K562 (cell line): ENCODE measurements at regions of chr6 and their contacts with region 1.

Region 1: DNA sequence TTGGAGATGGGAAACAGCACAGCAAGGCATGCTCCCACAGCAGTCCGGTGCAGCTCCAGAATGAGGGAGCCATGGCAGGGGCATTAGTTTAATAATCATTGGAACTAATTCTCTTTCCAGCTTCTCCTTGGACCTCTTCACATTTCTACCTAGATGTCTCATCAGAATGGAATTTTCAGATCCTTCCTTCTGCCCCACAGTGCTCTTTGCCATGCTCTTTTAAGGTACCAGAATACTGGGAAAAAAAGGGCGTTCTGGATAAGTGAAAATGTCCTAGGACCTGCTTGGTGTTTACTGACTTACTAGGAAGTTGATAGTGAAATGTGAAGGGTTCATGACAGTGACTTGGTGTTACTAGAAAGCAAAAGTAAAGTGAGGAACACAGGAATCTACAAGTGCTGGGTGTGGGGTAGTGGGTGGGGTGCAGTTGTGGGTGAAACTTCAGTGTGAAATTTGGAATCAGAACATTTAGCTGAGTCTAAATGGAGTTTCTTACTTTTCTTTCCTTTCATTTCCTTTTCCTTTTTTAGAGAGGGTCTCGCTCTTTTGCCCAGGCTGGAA is 207.1 kb downstream of the ARID1B start:
- DNase-seq: no peak
- ATAC-seq: no peak
- H3K4me3 ChIP-seq: no peak overlapping the region
- H3K27ac ChIP-seq: no peak overlapping the region
- H3K4me1 ChIP-seq: peaks cover 9 to 21% of the 10 kb centered on the region in 2 experiments
- H3K27me3 ChIP-seq: no peaks in the 10 kb centered on the region
- CTCF ChIP-seq: no peak
- EP300 ChIP-seq: no peak
- POLR2A ChIP-seq: no peak
- RAD21 ChIP-seq: no peak

Region 2: DNA sequence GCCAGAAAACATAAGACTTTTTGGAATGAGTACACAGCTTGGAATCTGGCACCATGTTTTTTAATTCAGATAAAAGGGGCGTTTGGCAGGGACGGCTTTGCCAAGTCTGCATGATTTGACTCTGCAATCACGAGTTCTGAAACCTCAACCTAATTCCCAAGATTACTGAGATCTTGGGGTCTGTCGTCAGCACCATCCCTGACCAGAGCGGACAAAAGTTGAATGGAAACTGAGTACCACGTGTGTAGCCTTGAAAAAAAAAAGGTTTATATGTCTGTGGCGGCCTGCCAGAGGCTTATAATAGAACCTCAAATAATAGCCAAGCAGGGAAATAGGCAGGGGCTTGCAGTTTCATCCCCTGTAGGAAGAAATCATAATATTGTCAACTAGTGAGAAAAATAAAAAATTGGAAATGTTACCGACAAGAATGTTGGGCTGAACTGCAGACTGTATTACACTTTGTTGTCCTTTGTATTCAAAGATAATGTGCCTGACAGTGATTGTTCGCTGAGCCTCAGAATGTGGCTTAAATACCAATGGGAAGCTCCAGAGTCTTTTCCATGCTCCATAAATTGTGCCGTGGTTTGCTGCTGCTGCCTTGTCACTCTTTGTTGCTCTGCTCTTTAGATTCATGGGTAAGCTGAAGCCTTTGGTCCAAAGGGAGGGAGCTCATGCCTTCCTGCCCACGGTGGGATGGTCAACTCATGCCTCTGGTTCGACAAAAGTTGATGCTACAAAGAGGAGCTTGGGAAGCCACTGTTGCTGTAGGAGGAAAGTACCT is 325.9 kb before region 1 on chr6:
- CTCF ChIA-PET with region 1: no interaction called
- POLR2A ChIA-PET with region 1: no interaction called
- in situ Hi-C with region 1: no loop called
- intact Hi-C with region 1: no loop called
- DNase-seq: no peak
- ATAC-seq: no peak
- H3K4me3 ChIP-seq: no peak overlapping the region
- H3K27ac ChIP-seq: no peak overlapping the region
- H3K4me1 ChIP-seq: no peaks in the 10 kb centered on the region; a peak in 2 of 5 replicates
- H3K27me3 ChIP-seq: peaks cover 9 to 24% of the 10 kb centered on the region in 2 experiments; a peak in 4 of 5 replicates
- CTCF ChIP-seq: no peak
- EP300 ChIP-seq: no peak
- POLR2A ChIP-seq: no peak
- RAD21 ChIP-seq: no peak

Region 3: DNA sequence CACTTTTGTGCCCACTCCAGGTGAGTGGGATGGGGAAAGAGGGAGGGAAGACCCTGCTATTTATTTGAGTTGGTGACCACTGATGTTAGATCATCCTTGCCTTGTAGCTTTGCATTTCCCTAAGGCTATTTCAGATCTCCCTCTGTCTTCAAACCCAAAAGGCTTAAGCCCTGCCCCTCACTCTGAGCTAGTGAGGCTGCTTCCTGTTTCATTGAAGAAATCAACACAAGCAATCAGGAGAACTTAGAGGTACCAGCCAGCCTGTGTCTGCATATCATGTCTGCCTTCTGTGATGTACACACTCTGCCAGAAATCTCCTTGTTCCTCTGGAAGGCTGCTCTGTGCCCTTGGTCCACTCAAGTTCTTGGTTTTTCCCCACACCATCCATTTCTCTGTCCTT is 71.8 kb before region 1 on chr6:
- CTCF ChIA-PET with region 1: no interaction called
- POLR2A ChIA-PET with region 1: no interaction called
- in situ Hi-C with region 1: no loop called
- intact Hi-C with region 1: no loop called
- DNase-seq: peak in 2 of 4 experiments; percentile 28 to 42
- ATAC-seq: peak; percentile 77
- H3K4me3 ChIP-seq: no peak overlapping the region
- H3K27ac ChIP-seq: no peak overlapping the region
- H3K4me1 ChIP-seq: peaks cover 5 to 21% of the 10 kb centered on the region in 2 experiments; a peak in 4 of 5 replicates
- H3K27me3 ChIP-seq: no peaks in the 10 kb centered on the region
- CTCF ChIP-seq: no peak
- EP300 ChIP-seq: no peak
- POLR2A ChIP-seq: no peak
- RAD21 ChIP-seq: no peak

Region 4: DNA sequence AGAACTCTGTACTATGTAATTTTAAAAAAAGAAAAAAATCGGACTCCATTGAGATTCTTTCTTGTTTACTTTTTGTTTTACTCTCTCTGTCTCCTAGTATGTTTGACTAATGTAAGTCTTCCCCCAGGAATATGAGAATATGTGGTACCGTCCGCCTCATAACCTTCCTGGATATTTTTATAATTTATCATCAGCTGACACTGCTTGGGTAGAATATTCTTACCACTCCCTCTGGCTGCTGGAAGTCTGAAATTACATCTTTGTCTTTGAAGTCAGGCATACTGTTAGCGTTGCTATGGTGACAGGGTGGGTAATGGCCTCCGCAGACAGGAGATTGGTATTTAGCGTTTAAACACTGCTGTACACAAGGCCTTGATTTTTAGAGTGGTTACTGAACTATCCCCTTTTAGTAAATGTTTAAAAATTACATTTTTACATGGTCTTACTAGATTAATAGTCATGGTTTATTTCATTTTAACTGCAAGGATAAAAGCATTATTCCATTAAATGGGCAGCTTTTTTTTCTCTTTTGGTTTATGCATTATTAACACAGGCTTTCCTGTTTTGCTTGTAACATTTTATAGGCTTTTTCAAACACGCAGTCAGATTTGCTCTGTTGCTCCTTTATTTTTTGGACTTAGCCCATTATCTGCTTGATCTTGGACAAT is 30.6 kb before region 1 on chr6:
- CTCF ChIA-PET with region 1: no interaction called
- POLR2A ChIA-PET with region 1: no interaction called
- in situ Hi-C with region 1: no loop called
- intact Hi-C with region 1: no loop called
- DNase-seq: peak; percentile 43 to 75 (median 62)
- ATAC-seq: peak; percentile 83
- H3K4me3 ChIP-seq: no peak overlapping the region
- H3K27ac ChIP-seq: no peak overlapping the region
- H3K4me1 ChIP-seq: peaks cover 7 to 11% of the 10 kb centered on the region in 2 experiments; a peak in 3 of 5 replicates
- H3K27me3 ChIP-seq: no peaks in the 10 kb centered on the region; a peak in 1 of 5 replicates
- CTCF ChIP-seq: peak in 1 of 3 experiments; percentile 44; a peak in 2 of 6 replicates
- EP300 ChIP-seq: no peak
- POLR2A ChIP-seq: no peak
- RAD21 ChIP-seq: peak; percentile 17 to 55; a peak in 3 of 4 replicates

Region 5: DNA sequence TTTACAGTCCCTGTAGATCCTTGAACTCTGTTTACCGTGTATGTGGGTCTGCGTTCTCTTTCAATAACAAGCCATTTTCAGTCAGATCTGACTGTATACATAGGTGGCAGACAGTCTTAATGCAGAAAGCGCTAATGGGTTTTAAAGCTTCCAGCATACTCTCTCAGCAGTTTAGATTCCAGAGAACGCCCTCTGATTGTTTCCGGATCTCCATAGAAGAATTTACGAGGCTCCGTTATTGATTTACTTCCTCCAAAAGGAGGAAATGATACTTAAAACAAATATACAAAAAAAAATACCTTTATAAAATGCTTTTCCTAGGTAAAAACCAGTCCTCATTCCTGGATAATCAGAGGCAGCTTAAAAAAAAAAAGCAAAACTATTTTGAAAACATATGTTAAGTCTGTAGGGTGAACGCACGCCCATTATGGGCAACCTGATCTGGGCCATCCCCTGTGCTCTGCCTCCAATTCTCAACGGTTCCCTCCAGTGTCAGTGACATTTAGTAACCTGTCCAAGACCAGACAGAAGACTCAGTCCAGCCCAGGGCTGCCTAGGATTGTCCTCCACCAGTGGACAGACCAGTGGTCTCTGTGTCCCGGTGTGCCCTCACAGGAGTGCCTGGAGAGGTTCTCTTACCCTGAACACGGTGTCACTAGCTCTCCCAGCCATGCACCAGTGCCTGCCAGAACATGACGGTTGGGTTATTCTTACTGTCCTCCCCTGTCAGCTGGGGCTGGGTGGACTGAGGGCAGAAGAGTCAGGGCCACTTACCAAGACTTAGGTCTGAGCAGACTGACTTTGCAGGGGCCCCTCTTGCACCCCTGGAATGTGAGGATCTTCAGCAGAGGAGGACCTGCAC is 10.2 kb after region 1 on chr6:
- CTCF ChIA-PET with region 1: no interaction called
- POLR2A ChIA-PET with region 1: interaction called, 11 read pairs
- in situ Hi-C with region 1: no loop called
- intact Hi-C with region 1: no loop called
- DNase-seq: no peak
- ATAC-seq: no peak; the same call in 1 of the 3 replicates
- H3K4me3 ChIP-seq: no peak overlapping the region
- H3K27ac ChIP-seq: no peak overlapping the region
- H3K4me1 ChIP-seq: peaks cover 9 to 14% of the 10 kb centered on the region in 2 experiments; a peak in 4 of 5 replicates
- H3K27me3 ChIP-seq: no peaks in the 10 kb centered on the region
- CTCF ChIP-seq: no peak
- EP300 ChIP-seq: no peak
- POLR2A ChIP-seq: no peak
- RAD21 ChIP-seq: no peak